Right ventricle myocardium superior (tissue), 1 donor: ENCODE measurements at regions of chr2 and their contacts with region 1.

Region 1: DNA sequence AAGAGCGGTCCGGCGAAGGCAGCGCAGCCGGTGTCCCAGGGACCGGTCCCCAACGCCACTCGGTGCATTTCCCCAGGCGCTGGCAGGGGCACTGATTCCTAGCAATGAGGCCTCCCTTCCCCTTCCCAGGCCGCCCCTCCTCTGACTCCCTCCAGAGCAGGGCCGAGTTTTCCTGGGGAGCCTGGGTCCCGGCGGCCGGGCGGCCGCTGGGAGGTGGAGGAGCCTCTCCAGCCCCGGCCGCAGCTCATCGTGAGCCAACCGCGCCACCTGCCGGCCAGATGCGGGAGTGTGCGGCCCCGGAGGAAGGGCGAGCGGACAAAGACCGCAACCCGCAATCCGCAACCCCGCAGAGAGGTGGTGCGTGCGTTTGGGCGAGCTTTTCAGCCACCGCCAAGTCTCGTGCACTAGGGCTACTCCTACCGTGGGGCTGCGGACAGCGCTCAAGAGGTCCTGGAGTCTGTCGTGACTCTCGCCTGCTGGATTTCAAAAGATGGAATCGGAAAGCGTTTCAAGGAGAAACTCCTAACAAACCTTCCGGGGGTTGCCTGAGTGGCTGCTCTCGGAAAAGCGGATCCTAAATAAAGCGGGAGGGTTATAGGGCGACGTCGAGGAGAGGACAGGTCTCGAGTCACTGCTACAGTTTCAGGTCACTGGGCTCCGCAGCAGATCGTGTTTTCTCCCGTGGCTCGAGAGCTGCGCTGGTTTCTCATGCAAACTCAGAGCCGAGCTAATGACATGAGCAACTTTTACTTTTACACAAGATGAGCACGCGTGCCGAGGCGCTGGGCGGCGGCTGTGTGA is 1.5 kb upstream of the EPHA4 start:
- DNase-seq: peak; percentile 92
- ATAC-seq: peak; percentile 88

Region 2: DNA sequence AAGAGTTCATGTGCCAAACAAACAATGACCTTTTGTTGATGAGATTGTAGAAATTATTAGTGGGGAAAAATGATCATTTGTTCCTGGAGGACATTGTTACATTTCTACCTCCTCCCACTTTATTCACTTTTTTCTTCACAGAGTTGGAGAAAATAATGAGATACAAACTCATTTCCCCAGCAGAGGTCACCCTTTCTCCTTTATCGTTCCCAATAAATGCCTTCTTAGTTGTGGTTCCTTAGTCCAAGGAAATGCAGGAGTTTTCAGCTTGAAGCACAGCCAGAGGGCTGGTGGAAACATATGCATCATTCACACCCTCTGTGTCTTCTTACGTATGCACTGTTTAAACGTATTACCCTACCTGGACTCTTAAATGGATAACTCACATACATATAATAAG is 1837.4 kb before region 1 on chr2:
- intact Hi-C with region 1: loop called (anchors 5 kb)
- DNase-seq: no peak
- ATAC-seq: peak; percentile 75

Region 3: GRCh38 chr2:220664272-220665107 is 909.1 kb before region 1 on chr2:
- intact Hi-C with region 1: no loop called
- DNase-seq: no peak
- ATAC-seq: peak; percentile 93

Region 4: GRCh38 chr2:220687231-220687843 is 886.3 kb before region 1 on chr2:
- intact Hi-C with region 1: loop called (anchors 5 kb)
- DNase-seq: peak; percentile 65
- ATAC-seq: peak; percentile 84

Region 5: DNA sequence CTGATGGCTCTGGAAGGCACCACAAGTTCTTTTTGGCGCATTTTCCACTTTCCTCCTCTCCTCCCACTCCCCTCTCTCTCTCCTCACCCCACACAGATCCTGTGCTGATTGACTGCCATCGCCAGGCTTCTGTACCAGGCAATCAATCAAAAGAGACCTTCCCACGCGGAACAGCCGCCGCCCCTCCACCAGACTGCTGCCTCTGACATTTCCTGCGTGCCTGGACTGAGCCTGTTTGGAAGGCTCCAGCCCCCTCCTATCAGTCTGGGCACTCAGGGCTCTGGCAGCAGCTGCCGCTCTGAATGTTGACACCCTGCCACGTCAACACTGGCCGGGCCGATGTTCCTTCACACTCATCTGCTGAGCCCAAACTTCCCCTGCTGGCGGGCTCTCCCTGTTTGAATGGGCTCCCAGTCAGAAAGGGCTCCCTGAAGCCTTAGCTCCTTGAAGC is 469.2 kb before region 1 on chr2:
- intact Hi-C with region 1: loop called (anchors 10 kb)
- DNase-seq: peak; percentile 90
- ATAC-seq: peak; percentile 98

Region 6: DNA sequence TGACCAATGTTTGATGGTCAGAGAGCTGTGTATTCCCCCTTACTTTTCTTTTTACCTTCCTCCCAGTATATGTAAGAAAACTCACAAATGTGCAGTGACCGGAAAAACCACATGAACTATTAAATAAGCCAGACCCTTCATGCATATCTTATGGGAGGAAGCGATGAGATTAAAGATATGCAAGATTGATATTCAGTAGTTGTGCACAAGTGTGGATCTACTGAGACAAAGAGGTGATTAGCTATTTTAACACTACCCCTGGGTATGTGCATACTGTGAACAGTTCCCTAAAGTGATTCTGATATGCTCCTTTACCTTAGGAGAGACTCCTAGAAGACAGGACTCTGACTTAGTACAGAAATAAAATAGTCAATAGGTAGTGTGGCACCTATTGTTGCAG is 329.9 kb before region 1 on chr2:
- intact Hi-C with region 1: no loop called
- DNase-seq: no peak
- ATAC-seq: no peak